Calu3 (cell line): ENCODE measurements at regions of chr19 and their contacts with region 1.

Region 1: DNA sequence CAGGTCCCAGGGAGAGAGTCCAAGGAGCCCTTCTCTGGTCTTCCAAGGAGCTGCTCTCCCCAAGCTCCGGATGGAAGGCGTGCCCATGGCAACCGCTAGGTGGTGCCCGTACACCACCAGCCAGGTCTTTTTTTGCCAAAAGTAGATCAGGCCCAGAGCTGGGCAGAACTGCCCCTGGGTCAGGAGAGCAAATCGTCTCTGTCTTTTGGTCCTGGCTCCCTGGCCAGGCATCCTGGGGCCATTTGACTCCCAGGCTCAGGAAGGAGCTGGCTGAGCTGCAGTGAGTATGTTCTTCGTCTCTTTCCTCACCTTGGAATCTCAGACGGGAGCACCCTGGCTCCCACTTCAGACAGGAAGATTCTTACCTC is 24.6 kb upstream of the BCL3 start:
- DNase-seq: peak; percentile 91
- H3K4me3 Mint-ChIP-seq: peak overlapping the region; percentile 22
- H3K27ac Mint-ChIP-seq: peak overlapping the region; percentile 74
- H3K4me1 Mint-ChIP-seq: peaks cover 62% of the 10 kb centered on the region
- H3K27me3 Mint-ChIP-seq: no peaks in the 10 kb centered on the region
- CTCF ChIP-seq: peak; percentile 98

Region 2: DNA sequence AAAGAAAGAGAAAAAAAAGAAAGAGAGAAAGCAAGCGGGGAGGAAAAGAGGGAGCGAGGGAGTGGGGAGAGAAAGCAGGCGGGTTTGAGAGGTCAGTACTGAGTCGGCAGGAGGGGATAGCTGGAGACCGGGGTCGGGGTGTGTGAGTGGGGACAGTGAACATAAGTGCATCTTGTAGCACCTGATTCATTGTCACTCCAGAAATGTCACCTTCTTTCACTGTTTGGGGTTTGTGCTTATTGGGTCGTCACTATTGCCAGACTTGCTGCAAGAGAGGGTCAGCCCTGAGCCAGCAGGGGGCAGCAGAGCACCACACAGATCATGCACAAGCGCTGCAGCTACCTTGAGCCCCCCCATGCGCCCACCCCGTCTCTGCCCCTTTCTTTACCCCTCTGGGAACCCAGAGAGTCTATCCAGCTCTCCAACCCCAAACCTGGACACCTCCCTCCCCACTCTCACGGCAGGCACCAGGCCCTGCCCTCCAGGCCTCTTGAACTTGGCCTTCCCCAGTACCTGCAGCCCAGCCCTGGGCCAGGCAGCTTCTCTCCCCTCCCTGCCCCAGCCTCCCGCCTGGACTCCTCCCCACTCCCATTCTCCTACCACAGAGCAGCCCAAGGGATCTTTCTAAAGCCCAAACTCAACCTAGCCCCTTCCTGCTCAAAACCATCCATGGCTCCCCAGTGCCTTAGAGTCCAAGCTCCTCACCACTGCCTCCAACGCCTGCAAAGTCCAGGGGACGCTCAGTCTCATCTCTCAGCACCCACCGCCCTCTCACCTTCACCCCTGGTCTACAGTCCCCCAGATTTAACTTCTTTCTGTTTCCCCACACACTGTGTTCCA is 34.7 kb before region 1 on chr19:
- CTCF ChIA-PET with region 1: interaction called, 16 read pairs
- intact Hi-C with region 1: loop called (anchors 5 kb)
- DNase-seq: peak; percentile 91
- H3K4me3 Mint-ChIP-seq: no peak overlapping the region
- H3K27ac Mint-ChIP-seq: peak overlapping the region; percentile 14
- H3K4me1 Mint-ChIP-seq: peaks cover 62% of the 10 kb centered on the region
- H3K27me3 Mint-ChIP-seq: no peaks in the 10 kb centered on the region
- CTCF ChIP-seq: peak; percentile 99

Region 3: DNA sequence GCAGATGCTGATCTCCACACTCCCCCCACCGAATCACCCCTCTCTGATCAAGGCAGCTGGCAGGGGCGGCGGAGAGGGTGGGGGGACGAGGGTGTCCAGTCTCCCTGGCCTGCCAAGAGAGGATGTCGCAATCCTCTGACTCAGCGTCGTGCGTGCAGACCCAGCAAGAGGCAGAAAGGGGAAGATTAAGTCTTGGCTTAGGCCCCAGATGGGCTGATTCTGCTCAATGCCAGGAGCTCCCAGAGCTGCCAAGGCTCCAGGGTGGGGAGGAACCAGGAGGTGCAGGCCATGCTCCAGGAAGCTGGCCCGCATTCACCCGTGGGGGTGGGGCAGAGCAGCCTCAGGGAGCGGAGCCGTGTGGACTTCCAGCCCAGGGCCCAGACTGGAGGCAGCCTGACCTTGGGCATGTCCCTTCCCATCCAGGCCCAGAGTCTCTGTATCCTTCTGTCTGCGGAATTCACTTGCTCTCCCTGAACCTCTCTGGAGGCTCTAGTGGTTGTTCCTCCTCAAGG is 18.0 kb after region 1 on chr19:
- CTCF ChIA-PET with region 1: interaction called, 14 read pairs
- intact Hi-C with region 1: no loop called
- DNase-seq: peak; percentile 99
- H3K4me3 Mint-ChIP-seq: peak overlapping the region; percentile 56
- H3K27ac Mint-ChIP-seq: peak overlapping the region; percentile 91
- H3K4me1 Mint-ChIP-seq: peaks cover 74% of the 10 kb centered on the region
- H3K27me3 Mint-ChIP-seq: no peaks in the 10 kb centered on the region
- CTCF ChIP-seq: no peak

Region 4: DNA sequence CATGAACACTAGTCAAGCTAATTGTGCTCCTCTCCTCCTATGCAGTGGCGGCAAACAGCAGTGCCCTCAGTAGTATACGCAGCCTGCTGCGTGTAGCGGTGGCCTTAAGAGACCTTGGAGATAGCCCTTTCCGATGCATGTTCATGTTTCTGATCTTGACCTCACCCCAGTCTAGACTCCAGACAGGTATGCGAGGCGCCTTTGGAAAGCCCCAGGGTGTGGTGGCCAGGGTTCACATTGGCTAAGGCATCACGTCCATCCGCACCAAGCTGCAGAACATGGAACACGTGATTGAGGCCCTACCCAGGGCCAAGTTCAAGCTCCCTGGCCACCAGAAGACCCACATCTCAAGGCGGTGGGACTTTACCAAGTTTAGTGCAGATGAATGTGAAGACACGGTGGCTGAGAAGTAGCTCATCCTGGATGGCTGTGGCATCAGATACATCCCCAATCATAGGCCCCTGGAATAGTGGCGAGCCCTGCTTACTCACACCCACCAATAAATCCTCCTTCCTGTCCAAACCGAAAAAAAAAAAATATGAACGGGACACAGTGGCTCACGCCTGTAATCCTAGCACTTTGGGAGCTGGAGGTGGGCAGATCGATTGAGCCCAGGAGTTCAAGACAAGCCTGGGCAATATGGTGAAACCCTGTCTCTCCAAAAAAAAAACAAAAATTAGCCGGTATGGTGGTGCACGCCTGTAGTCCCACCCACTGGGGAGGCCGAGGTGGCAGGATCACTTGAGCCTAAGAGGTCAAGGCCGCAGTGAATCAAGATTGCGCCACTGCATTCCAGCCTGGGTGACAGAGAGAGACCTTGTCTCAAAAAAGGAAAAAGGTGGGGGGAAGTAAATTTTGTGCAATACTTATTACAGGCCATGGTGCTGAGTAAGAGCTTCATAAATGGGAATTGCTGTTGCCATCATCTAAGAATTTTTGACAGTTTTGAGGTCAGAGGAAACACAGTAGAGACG is 41.3 kb after region 1 on chr19:
- CTCF ChIA-PET with region 1: interaction called, 223 read pairs
- intact Hi-C with region 1: loop called (anchors 1 kb)
- DNase-seq: peak; percentile 66
- H3K4me3 Mint-ChIP-seq: peak overlapping the region; percentile 26
- H3K27ac Mint-ChIP-seq: peak overlapping the region; percentile 27
- H3K4me1 Mint-ChIP-seq: peaks cover 18% of the 10 kb centered on the region
- H3K27me3 Mint-ChIP-seq: no peaks in the 10 kb centered on the region
- CTCF ChIP-seq: no peak

Region 5: GRCh38 chr19:44845612-44846454 is 121.9 kb after region 1 on chr19 and contains the start of gene NECTIN2:
- CTCF ChIA-PET with region 1: interaction called, 23 read pairs
- intact Hi-C with region 1: loop called (anchors 10 kb)
- DNase-seq: peak; percentile 100
- H3K4me3 Mint-ChIP-seq: peak within 1 kb of the TSS; percentile 66
- H3K27ac Mint-ChIP-seq: peak within 1 kb of the TSS; percentile 73
- H3K4me1 Mint-ChIP-seq: peaks cover 34% of the 10 kb centered on the region
- H3K27me3 Mint-ChIP-seq: no peaks in the 10 kb centered on the region
- CTCF ChIP-seq: peak; percentile 83
- total RNA-seq, gene NECTIN2: 137 and 174 TPM in 2 replicates